ENCODE measurements at regions of chr10 and their contacts with region 1.

Region 1: DNA sequence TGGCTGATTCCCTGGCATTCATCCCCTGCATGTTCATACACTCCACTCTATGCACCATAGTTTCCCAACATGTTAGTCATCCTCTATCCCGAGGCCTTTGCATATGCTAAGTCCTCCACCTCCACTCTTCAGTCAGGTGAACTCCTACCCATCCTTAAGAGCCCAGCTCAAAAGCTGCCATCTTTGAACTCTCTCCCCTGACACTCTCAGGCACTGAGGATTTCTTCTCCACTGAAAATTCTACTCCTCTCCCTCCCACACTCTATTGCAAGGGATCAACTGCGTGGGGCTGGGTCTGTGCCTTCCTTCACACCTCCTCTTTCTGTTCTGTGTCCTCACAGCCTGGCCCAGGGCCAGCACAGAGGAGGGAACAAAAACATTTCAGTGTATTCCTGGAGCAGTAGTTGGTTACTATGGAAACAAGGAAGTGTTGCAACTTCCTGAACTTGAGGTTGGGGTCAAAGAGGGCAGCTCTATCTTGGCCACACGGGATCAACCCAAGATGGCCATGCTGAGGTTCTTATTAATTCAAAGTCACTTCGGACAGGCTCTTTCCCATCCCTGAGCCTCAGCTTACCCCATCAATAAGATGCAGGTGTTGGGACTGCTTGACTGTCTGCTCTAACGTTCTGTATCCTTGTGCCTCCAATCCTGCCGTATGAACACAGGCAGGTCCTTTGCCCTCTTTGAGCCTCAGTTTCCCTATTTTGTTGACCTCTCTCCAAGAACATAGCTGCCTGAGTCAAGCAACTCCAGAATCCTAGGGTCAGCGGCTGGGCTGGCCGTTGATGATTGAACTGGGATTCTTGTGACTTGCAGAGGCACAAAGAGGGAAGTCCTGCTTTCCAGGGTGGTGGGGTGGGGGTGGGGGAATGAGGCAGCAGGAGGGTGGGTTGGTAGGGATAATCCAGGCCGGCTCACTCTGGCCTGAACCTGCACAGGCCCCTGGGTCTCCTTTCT is 15.5 kb downstream of the ZMIZ1 start:
- DNase-seq: peak; percentile 68 to 90
- ATAC-seq: peak; percentile 1 to 6
- H3K4me3 ChIP-seq: no peak overlapping the region
- H3K27ac ChIP-seq: peak overlapping the region; percentile 90 to 95 (median 94)
- H3K4me1 ChIP-seq: peaks cover 92 to 97% of the 10 kb centered on the region in 2 donors
- H3K27me3 ChIP-seq: no peaks in the 10 kb centered on the region
- CTCF ChIP-seq: no peak
- POLR2A ChIP-seq: no peak

Region 2: DNA sequence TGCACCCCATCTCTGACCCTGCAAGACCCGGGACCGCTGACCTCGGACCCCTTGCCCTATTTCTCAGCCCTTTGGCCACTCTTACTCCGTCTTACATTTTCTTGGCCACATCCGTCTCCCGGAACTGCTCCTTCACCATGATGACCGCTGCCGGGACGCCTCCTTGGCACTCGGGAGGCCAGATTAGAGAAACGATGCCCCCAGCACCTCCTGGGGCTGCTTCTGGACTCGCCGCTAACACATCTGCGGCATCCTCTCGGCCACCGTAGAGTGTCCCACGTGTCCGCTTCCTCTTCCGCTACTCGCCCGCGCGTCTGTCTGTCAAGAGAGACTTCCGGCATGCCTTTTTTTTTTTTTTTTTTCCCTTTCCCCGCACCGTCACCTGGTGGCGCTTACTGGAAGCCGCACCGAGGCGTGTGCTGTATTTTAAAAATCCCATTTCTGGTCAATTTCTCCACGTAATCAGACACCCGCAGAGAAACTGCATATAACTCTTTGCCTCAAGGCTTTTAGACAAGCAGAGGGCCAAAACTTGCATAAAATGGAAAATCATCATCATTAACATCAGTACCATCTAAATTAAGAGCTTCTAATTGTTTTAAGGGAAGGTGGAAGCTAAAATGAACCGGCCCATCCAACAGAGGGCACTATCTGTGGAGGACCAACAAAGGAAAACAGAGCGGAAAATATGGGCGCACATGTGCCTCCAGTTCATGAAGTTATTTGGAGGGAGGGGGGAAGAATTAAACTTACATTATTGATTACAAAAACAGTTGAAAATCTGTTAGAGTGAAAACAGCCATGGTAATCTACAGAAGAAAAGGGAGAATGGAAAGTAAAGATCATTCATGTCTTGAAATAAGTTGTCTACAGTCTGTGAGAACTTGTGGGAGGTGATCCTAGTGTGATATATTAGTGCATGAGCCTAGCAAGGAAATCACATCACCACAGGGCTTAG is 1054.7 kb before region 1 on chr10 and contains the start of gene POLR3A:
- in situ Hi-C with region 1: loop called in 1 of 4 experiments (anchors 25 kb)
- intact Hi-C with region 1: no loop called
- DNase-seq: peak; percentile 94 to 97
- ATAC-seq: peak; percentile 73 to 75
- H3K4me3 ChIP-seq: peak within 1 kb of the TSS; percentile 95 to 99 (median 97)
- H3K27ac ChIP-seq: peak within 1 kb of the TSS; percentile 79 to 87 (median 84)
- H3K4me1 ChIP-seq: peaks cover 23 to 28% of the 10 kb centered on the region in 2 donors
- H3K27me3 ChIP-seq: no peaks in the 10 kb centered on the region
- CTCF ChIP-seq: peak; percentile 69 to 86 (median 73)
- POLR2A ChIP-seq: peak; percentile 46 to 62
- total RNA-seq, gene POLR3A: 11.0 to 17.4 (median 15.5) TPM

Region 3: DNA sequence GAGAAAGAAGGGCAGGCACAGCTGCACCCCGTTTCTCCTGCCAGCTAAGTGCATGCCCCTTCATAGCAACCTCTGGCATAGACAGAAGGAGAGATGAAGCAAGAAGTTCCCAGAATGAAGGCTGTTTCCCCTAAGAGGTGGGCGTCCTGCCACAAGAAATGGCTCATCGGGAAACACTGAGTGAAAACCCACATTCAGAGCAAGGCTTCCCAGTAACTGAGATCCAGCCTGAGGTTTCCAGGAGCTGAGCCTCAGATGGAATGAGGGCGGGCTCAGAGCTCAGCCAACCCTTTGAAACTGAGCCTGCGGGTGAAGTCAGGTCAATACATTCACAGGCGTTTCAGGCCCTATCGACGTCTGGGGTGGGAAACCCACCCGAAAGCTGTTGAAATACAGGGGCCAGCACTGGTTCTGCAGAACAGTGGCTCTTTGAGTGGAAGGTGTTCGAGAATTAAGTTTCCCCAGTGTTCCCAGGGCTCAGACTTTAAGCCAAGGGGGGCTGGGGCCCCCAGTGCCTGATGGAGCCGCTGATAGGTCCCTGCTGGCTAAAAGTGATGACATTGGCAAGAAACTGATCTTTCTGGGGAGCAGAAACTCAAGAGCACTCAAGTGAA is 540.4 kb before region 1 on chr10:
- in situ Hi-C with region 1: no loop called
- intact Hi-C with region 1: no loop called
- DNase-seq: peak; percentile 48 to 79
- ATAC-seq: peak; percentile 85
- H3K4me3 ChIP-seq: no peak overlapping the region
- H3K27ac ChIP-seq: peak overlapping the region; percentile 23 to 47 (median 36)
- H3K4me1 ChIP-seq: peaks cover 13 to 14% of the 10 kb centered on the region in 2 donors
- H3K27me3 ChIP-seq: no peaks in the 10 kb centered on the region
- CTCF ChIP-seq: no peak
- POLR2A ChIP-seq: no peak

Region 4: GRCh38 chr10:78712147-78712546 is 372.1 kb before region 1 on chr10:
- in situ Hi-C with region 1: no loop called
- intact Hi-C with region 1: no loop called
- DNase-seq: no peak
- ATAC-seq: no peak
- H3K4me3 ChIP-seq: no peak overlapping the region
- H3K27ac ChIP-seq: no peak overlapping the region
- H3K4me1 ChIP-seq: peaks cover 4 to 5% of the 10 kb centered on the region in 2 donors
- H3K27me3 ChIP-seq: no peaks in the 10 kb centered on the region
- CTCF ChIP-seq: no peak
- POLR2A ChIP-seq: no peak

Region 5: GRCh38 chr10:79116801-79117723 is 32.8 kb after region 1 on chr10:
- in situ Hi-C with region 1: no loop called
- intact Hi-C with region 1: loop called (anchors 2 kb)
- DNase-seq: peak; percentile 60 to 62
- ATAC-seq: peak in 1 of 2 donors; percentile 10
- H3K4me3 ChIP-seq: no peak overlapping the region
- H3K27ac ChIP-seq: peak overlapping the region; percentile 10 to 38 (median 30)
- H3K4me1 ChIP-seq: peaks cover 59 to 65% of the 10 kb centered on the region in 2 donors
- H3K27me3 ChIP-seq: no peaks in the 10 kb centered on the region
- CTCF ChIP-seq: no peak
- POLR2A ChIP-seq: no peak

Region 6: GRCh38 chr10:79176052-79176501 is 91.8 kb after region 1 on chr10:
- in situ Hi-C with region 1: no loop called
- intact Hi-C with region 1: no loop called
- DNase-seq: no peak
- ATAC-seq: no peak
- H3K4me3 ChIP-seq: no peak overlapping the region
- H3K27ac ChIP-seq: peak overlapping the region in 3 of 4 donors; percentile 32 to 44 (median 38)
- H3K4me1 ChIP-seq: peaks cover 40 to 42% of the 10 kb centered on the region in 2 donors
- H3K27me3 ChIP-seq: no peaks in the 10 kb centered on the region
- CTCF ChIP-seq: no peak
- POLR2A ChIP-seq: no peak

Region 7: DNA sequence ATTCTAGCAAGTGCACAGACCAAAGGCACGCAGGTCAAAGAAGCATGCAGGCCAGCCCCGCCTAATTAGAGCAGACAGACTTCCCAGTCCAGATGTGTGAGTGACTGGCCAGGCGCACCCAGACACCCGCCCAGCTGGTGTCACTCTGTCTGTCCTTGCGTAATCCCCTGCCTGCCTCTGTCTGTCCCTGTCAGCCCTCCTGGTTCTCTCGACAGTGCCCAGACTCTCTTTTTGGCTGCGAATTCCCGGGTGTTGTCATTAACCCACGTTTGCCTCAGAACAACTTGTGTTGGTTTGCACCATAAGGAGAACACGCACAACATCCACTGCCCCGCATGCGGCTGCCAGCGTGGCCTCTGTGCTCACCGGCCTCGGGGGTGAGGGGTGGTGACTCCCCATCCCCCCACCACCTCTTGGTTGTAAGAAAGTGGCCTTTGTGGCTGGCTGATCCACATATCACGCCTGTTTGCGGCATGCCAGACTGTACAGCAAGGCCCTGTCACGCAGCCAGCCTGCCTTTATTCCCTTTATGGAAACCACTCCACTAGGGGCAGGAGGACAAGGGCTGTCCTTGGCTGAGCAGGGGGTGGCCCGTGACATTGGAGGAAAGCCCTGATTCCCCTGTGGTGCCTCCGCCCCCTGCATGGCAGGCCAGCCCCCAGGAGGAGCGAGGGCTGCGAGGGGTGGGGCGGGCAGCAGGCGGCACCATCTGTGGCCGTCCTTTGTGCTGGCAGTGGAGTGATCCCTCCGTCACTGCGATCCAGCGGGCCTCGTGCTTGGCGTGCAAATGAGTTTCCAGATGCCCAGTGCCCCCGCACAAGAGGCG is 190.2 kb after region 1 on chr10:
- in situ Hi-C with region 1: no loop called
- intact Hi-C with region 1: loop called (anchors 5 kb)
- DNase-seq: peak; percentile 90 to 97
- ATAC-seq: peak; percentile 88
- H3K4me3 ChIP-seq: peak overlapping the region in 2 of 4 donors; percentile 13 to 20
- H3K27ac ChIP-seq: peak overlapping the region; percentile 82 to 89 (median 88)
- H3K4me1 ChIP-seq: peaks cover 23 to 42% of the 10 kb centered on the region in 2 donors
- H3K27me3 ChIP-seq: no peaks in the 10 kb centered on the region
- CTCF ChIP-seq: peak in 4 of 5 experiments; percentile 13 to 35 (median 24)
- POLR2A ChIP-seq: no peak

Region 8: DNA sequence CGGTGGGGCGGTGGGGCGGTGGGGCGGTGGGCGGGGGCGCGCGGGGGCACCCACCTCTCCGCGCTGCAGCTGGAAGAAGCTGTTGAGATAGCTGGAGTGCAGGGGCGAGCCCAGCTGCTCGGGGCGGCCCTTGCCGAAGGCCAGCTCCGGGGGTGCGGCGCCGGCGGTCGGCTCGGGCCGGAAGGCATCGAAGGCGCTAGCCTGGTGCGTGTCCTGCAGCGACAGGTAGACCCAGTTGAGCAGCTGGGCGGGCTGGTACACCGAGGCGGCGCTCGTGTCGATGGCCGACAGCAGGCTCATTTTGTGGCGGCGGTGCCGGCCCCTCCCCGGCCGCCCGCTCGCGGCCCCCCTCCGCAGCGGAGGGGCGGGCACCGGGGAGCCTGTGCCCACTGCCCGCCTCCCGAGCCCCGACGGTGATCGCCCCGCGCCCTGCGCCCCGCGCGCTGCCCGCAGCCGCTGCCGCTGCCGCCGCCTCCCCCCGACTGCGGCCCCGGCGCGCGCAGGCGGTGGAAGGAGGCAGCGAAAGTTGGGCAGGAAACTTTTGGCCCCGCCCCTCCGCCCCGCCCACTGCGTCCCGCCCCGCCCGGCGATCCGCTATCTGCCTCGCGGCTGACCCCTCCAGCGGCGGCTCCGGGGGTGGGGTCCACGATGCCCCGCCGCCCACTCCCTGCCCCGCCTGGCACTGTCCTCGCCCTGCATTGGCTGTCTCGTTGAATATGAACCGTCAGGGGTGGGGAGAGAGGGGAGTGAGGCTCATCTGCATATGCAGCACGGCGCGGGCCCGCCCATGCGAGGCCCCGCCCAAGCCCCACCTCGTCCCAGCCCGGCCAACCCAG is 361.1 kb after region 1 on chr10 and contains the start of gene ZCCHC24:
- in situ Hi-C with region 1: loop called in 1 of 4 experiments (anchors 25 kb)
- intact Hi-C with region 1: no loop called
- DNase-seq: peak; percentile 99
- ATAC-seq: peak; percentile 57 to 64
- H3K4me3 ChIP-seq: peak within 1 kb of the TSS; percentile 69 to 88 (median 71)
- H3K27ac ChIP-seq: peak within 1 kb of the TSS; percentile 91 to 98 (median 94)
- H3K4me1 ChIP-seq: peaks cover 69 to 78% of the 10 kb centered on the region in 2 donors
- H3K27me3 ChIP-seq: no peaks in the 10 kb centered on the region
- CTCF ChIP-seq: peak in 1 of 5 experiments; percentile 12
- POLR2A ChIP-seq: peak; percentile 97 to 98
- total RNA-seq, gene ZCCHC24: 59.6 to 122 (median 84.5) TPM